Activated CD4-positive, alpha-beta T cell treated with anti-CD3 and anti-CD28 coated beads, Interleukin-2, amount 10 ng/mL, durations not matched to agents 24 days and 14 days (primary cell): ENCODE measurements at regions of chr5 and their contacts with region 1.

Region 1: DNA sequence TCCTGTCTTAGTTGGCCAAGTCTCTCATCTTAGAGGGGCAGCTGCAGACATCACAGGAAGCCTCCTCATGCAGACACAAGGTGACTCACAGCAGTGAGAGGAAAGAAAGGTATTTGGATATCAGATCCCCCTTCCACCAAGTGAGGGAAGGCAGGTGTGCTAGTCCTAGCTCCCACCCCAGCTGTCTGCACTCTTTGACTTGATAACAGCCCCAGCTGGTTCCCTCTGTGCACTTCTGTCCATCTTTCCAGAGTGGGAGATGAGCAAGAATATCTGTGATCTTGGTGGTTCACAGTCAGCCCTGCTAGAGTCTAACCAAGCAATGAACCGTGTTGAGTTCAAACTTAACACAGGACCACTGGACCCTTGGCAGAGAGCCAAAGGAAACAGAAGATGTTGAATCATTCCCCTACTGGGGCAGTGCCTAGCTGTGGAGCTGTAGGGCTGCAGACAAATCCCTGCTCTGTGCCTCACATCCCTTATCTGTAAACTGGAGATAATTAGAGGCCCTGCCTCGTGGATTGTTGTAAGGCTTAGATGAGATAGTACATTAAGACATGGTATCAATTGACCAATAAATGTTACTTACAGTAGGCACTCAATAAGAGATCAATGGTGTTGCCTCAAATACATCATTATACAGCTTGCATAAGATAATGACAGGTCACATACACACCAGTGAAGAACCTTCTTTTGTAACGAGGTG is 39.1 kb downstream of the SH3RF2 start:
- DNase-seq: no peak
- H3K4me3 Mint-ChIP-seq: no peak overlapping the region
- H3K27ac Mint-ChIP-seq: no peak overlapping the region
- H3K4me1 Mint-ChIP-seq: no peaks in the 10 kb centered on the region
- H3K27me3 Mint-ChIP-seq: peaks cover 3% of the 10 kb centered on the region

Region 2: GRCh38 chr5:145936401-145937131 is 38.9 kb before region 1 on chr5 and contains the start of gene SH3RF2:
- intact Hi-C with region 1: loop called (anchors 5 kb)
- DNase-seq: peak; percentile 74
- H3K4me3 Mint-ChIP-seq: peak within 1 kb of the TSS; percentile 73
- H3K27ac Mint-ChIP-seq: peak within 1 kb of the TSS; percentile 48
- H3K4me1 Mint-ChIP-seq: peaks cover 21% of the 10 kb centered on the region
- H3K27me3 Mint-ChIP-seq: peaks cover 62% of the 10 kb centered on the region
- total RNA-seq, gene SH3RF2: 0.02 and 0.05 TPM in 2 replicates